ENCODE measurements at regions of chr9 and their contacts with region 1.

Region 1: DNA sequence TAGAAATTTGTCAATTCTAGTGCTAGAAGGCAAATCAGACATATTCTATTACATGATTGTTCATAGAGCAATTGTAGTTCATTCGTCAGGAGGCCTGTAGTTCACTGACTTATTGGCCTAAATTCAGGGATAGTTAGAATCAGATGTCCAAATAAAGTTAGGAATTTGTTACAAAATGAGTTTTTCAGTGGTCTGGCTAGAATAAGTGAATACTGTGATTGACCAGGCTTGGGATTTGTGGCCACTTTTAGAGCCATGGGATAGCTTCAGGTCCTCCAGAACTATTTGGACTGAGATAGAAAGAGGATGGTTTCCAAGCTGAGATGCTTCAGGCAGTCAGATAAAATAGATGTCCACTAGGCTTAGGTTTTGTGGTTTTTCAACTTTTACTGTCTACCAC is 199.1 kb upstream of the MPDZ start:
- DNase-seq: no peak
- ATAC-seq: no peak
- H3K4me3 ChIP-seq: no peak overlapping the region
- H3K4me3 Mint-ChIP-seq: no peak overlapping the region
- H3K27ac ChIP-seq: no peak overlapping the region
- H3K27ac Mint-ChIP-seq: no peak overlapping the region
- H3K4me1 ChIP-seq: no peaks in the 10 kb centered on the region
- H3K4me1 Mint-ChIP-seq: no peaks in the 10 kb centered on the region
- H3K27me3 ChIP-seq: no peaks in the 10 kb centered on the region
- H3K27me3 Mint-ChIP-seq: no peaks in the 10 kb centered on the region
- CTCF ChIP-seq: no peak

Region 2: GRCh38 chr9:13500034-13500433 is 21.4 kb after region 1 on chr9:
- CTCF ChIA-PET with region 1: no interaction called
- POLR2A ChIA-PET with region 1: no interaction called
- intact Hi-C with region 1: loop called (anchors 1 kb)
- DNase-seq: no peak
- ATAC-seq: no peak
- H3K4me3 ChIP-seq: no peak overlapping the region
- H3K4me3 Mint-ChIP-seq: no peak overlapping the region
- H3K27ac ChIP-seq: no peak overlapping the region
- H3K27ac Mint-ChIP-seq: no peak overlapping the region
- H3K4me1 ChIP-seq: no peaks in the 10 kb centered on the region
- H3K4me1 Mint-ChIP-seq: no peaks in the 10 kb centered on the region
- H3K27me3 ChIP-seq: no peaks in the 10 kb centered on the region
- H3K27me3 Mint-ChIP-seq: no peaks in the 10 kb centered on the region
- CTCF ChIP-seq: no peak

Region 3: DNA sequence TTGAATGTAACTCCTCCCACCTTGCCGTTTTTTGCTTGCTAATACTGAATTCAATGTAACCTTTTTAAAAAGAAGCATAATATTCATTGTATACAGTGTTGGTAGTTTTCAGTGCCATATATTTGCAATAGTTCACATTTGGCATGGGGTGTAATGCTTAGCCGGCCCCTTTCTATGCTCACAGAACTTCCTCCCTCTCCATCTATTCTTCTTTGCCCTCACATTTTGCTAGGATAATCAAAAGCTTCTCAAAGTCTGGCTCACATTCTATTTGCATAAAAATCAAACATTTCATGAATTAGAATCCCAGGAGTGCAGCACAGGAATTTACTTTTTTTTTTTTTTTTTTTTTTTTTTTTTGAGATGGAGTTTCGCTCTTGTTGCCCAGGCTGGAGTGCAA is 27.2 kb after region 1 on chr9:
- CTCF ChIA-PET with region 1: no interaction called
- POLR2A ChIA-PET with region 1: no interaction called
- intact Hi-C with region 1: loop called in 1 of 2 experiments (anchors 1 kb)
- DNase-seq: no peak
- ATAC-seq: no peak
- H3K4me3 ChIP-seq: no peak overlapping the region
- H3K4me3 Mint-ChIP-seq: no peak overlapping the region
- H3K27ac ChIP-seq: no peak overlapping the region
- H3K27ac Mint-ChIP-seq: no peak overlapping the region
- H3K4me1 ChIP-seq: no peaks in the 10 kb centered on the region
- H3K4me1 Mint-ChIP-seq: no peaks in the 10 kb centered on the region
- H3K27me3 ChIP-seq: no peaks in the 10 kb centered on the region
- H3K27me3 Mint-ChIP-seq: no peaks in the 10 kb centered on the region
- CTCF ChIP-seq: no peak

Measured in CD4-positive, alpha-beta T cell (primary cell).